Endothelial cell of umbilical vein (primary cell): ENCODE measurements at regions of chr16 and their contacts with region 1.

Region 1: DNA sequence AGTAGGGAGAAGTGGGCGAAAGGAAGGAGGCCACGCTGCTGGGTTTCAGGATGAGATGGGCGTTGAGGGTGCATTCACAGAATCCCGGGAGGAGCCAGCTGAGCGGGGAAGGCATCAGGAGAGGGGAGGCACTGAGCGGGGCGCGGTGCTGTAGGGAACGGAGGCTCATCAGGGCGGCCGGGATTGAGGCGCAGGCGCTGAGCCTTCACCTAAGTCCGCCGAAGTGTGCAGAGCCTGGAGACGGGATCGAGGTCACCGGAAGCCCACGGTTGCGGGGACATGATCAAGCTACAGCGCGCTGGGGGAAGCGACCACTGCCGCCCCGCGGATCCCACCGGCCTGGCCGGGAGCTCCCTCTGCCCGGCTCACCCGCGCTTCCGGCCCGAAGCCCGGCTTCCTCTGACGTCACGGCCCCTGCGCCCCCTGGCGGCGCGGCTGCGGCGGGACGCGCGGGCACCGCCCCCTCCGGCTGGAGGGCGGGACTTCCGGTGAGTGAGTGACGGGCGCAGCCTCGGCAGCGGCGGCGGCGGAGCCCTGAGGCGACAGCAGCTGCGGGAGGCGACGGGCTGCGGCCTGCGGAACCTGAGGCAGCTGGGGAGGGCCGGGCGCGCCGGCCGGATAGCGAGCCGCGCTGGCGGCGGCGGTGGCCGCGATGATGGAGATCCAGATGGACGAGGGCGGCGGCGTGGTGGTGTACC is at the start of gene MAPK8IP3:
- DNase-seq: peak; percentile 95
- H3K4me3 ChIP-seq: peak within 1 kb of the TSS; percentile 39 to 82 (median 60)
- H3K27ac ChIP-seq: peak within 1 kb of the TSS; percentile 72
- H3K4me1 ChIP-seq: peaks cover 12% of the 10 kb centered on the region
- H3K27me3 ChIP-seq: no peaks in the 10 kb centered on the region
- CTCF ChIP-seq: peak; percentile 73 to 100
- POLR2A ChIP-seq: peak; percentile 97
- total RNA-seq, gene MAPK8IP3: 92.2 and 95.0 TPM in 2 replicates

Region 2: DNA sequence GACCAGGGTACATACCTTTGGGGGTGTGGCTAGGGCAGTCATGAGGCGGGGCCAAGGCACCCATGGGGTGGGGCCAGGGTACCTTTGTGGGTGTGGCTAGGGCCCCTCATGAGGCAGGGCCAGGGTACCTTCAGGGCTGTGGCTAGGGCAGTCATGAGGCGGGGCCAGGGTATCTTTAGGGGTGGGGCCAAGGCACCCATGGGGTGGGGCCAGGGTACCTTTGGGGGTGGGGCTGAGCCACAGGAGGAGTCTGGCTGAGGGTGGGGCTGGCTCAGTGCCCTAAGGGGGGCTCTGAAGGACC is 908.8 kb before region 1 on chr16:
- CTCF ChIA-PET with region 1: no interaction called
- POLR2A ChIA-PET with region 1: no interaction called
- dilution Hi-C with region 1: no loop called
- intact Hi-C with region 1: no loop called
- DNase-seq: no peak
- H3K4me3 ChIP-seq: no peak overlapping the region
- H3K27ac ChIP-seq: no peak overlapping the region
- H3K4me1 ChIP-seq: no peaks in the 10 kb centered on the region
- H3K27me3 ChIP-seq: peaks cover 11 to 18% of the 10 kb centered on the region in 2 experiments
- CTCF ChIP-seq: no peak
- POLR2A ChIP-seq: no peak

Region 3: DNA sequence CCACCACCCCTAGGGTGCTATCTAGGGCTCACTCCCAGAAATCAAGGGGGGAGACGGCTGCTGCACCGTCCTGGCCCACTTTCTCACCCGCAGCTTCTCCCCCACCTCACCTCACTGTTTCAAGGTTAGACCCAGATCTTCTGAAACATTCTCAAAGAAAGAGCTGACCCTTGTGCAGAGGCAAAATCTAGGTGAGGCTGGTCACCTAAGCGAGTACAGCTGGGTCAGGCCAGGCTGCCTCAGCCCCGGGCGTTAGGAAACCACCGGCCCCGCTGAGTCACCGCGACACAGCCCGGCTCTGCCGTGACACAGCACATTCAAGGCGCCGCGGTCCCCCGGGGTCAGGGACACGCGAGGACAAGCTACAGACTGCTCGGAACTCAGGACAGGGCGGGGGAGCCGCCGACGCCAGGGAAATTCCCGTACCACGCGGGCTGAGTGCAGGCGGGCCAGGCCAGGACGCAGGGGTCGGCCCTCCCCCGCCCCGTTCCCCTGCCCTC is 327.0 kb before region 1 on chr16:
- CTCF ChIA-PET with region 1: no interaction called
- POLR2A ChIA-PET with region 1: no interaction called
- dilution Hi-C with region 1: no loop called
- intact Hi-C with region 1: loop called (anchors 5 kb)
- DNase-seq: peak; percentile 72
- H3K4me3 ChIP-seq: peak overlapping the region; percentile 10 to 41 (median 39)
- H3K27ac ChIP-seq: peak overlapping the region; percentile 91
- H3K4me1 ChIP-seq: peaks cover 12% of the 10 kb centered on the region
- H3K27me3 ChIP-seq: no peaks in the 10 kb centered on the region
- CTCF ChIP-seq: no peak
- POLR2A ChIP-seq: no peak

Region 4: DNA sequence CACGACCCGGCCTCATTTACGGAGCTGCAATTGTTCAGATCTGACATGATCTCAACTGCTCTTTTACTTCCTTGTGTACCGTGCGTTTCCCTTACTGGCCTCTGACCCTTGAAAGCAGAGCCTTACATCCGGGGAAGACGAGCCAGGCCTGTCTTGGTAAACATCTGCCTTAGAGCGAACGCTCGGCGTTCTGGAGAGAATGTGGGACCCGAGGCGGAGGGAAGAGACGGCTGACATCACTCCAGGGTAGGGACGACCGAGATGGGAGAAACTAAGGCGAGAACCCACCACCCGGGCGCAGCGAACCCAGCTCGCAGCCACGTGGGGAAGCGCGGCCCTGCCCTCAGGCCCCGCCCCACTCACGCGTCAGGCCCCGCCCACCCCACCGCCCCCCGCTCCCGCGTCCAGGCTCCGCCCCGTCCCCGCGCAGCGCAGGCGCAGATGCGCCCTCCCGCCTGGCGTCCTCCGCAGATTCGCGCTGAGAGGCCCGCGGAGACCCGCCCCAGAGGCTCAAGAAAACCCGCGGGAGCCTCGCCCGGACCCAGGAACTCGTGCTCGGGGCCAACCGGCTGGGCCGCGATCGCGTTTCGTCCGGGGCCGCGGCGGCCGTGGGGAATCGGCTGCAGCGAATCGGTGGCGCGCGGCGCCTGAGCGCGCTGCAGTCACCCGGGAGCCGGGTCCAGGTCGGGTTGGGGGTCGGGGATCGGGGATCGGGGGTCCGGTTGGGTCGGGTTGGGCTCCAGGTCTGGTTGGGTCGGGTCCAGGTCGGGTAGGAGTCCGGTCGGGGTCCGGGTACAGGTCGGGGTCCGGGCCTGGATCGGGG is 212.7 kb before region 1 on chr16 and contains the start of gene TELO2:
- CTCF ChIA-PET with region 1: interaction called, 20 read pairs
- POLR2A ChIA-PET with region 1: no interaction called
- dilution Hi-C with region 1: no loop called
- intact Hi-C with region 1: loop called (anchors 5 kb)
- DNase-seq: peak; percentile 63
- H3K4me3 ChIP-seq: peak within 1 kb of the TSS; percentile 67 to 85 (median 77)
- H3K27ac ChIP-seq: peak within 1 kb of the TSS; percentile 84
- H3K4me1 ChIP-seq: peaks cover 15% of the 10 kb centered on the region
- H3K27me3 ChIP-seq: no peaks in the 10 kb centered on the region
- CTCF ChIP-seq: no peak
- POLR2A ChIP-seq: peak; percentile 68
- total RNA-seq, gene TELO2: 60.5 and 61.6 TPM in 2 replicates

Region 5: DNA sequence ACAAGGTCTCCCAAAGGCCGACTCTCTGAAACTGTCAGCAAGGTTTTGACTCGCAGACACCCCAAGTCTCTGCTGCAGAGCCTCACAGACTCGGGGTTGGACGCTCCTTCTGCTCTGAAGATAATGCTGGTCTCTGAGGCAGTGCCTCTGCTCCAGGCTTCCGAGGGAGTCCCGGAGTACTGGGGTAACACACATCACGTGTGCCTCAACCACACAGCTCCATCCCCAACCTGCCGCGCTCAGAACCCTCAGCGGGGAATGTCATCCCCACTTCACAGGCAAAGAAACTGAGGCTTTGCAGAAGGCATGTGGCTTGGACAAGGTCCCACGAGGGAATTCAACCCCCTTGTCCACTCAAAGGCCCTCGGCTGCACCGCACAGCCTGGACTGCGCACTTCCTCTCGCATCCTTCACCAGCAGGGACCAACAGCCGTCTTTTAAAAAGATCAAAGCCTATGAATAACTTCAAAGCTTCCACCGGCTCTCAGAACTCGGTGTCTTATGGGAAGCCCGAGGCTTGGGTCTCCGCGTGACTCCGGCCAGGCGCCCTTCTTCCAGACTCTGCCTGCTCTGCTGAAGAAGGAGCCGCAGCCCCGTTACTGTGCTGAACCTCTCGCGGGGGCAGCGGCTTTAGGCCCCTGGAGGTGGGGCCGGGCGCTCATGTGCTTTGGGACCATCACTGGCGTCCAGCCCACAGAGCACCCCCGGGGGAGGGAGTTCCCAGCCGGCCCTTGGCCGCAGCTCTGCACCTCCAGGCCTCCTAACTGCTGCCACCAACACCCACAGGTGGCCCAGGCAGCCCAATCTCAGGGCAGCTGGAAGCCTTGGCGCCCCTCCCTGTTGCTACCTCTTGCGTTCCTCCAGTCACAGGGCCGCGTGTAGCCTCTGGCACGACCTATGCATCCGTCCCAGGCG is 170.2 kb before region 1 on chr16:
- CTCF ChIA-PET with region 1: no interaction called
- POLR2A ChIA-PET with region 1: no interaction called
- dilution Hi-C with region 1: no loop called
- intact Hi-C with region 1: no loop called
- DNase-seq: no peak
- H3K4me3 ChIP-seq: peak overlapping the region in 2 of 3 experiments; percentile 56 to 72
- H3K27ac ChIP-seq: no peak overlapping the region
- H3K4me1 ChIP-seq: peaks cover 37% of the 10 kb centered on the region
- H3K27me3 ChIP-seq: no peaks in the 10 kb centered on the region
- CTCF ChIP-seq: no peak
- POLR2A ChIP-seq: no peak

Region 6: DNA sequence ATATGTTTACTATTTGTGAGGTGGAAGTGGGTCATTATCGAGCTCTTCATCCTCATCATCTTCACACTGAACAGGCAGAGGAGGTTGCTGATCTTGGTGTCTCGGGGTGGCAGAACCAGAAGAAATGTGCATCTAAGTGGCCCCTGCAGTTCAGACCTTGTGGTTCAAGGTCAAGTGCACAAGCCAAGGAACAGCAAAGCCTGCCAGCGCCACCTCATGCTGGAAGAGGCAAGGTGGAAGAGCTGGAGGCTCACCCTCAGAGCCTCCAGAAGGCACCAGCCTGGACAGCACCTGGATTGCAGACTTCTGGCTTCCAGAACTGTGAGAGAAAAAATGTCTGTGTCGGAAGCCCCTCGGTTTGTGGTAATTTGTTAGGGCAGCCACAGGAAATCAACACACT is 126.6 kb before region 1 on chr16:
- CTCF ChIA-PET with region 1: no interaction called
- POLR2A ChIA-PET with region 1: no interaction called
- dilution Hi-C with region 1: no loop called
- intact Hi-C with region 1: no loop called
- DNase-seq: no peak
- H3K4me3 ChIP-seq: no peak overlapping the region
- H3K27ac ChIP-seq: no peak overlapping the region
- H3K4me1 ChIP-seq: no peaks in the 10 kb centered on the region
- H3K27me3 ChIP-seq: no peaks in the 10 kb centered on the region
- CTCF ChIP-seq: no peak
- POLR2A ChIP-seq: no peak

Region 7: GRCh38 chr16:1677802-1678496 is 27.9 kb before region 1 on chr16 and contains the start of gene JPT2:
- CTCF ChIA-PET with region 1: interaction called, 52 read pairs
- POLR2A ChIA-PET with region 1: interaction called, 14 read pairs
- dilution Hi-C with region 1: no loop called
- intact Hi-C with region 1: loop called (anchors 1 kb)
- DNase-seq: peak; percentile 99
- H3K4me3 ChIP-seq: peak within 1 kb of the TSS; percentile 60 to 96 (median 78)
- H3K27ac ChIP-seq: peak within 1 kb of the TSS; percentile 1
- H3K4me1 ChIP-seq: peaks cover 12% of the 10 kb centered on the region
- H3K27me3 ChIP-seq: no peaks in the 10 kb centered on the region
- CTCF ChIP-seq: no peak
- POLR2A ChIP-seq: peak; percentile 48
- total RNA-seq, gene JPT2: 86.5 and 93.3 TPM in 2 replicates

Region 8: GRCh38 chr16:1752853-1753252 is 47.0 kb after region 1 on chr16:
- CTCF ChIA-PET with region 1: no interaction called
- POLR2A ChIA-PET with region 1: no interaction called
- dilution Hi-C with region 1: no loop called
- intact Hi-C with region 1: no loop called
- DNase-seq: no peak
- H3K4me3 ChIP-seq: no peak overlapping the region
- H3K27ac ChIP-seq: no peak overlapping the region
- H3K4me1 ChIP-seq: no peaks in the 10 kb centered on the region
- H3K27me3 ChIP-seq: no peaks in the 10 kb centered on the region
- CTCF ChIP-seq: no peak
- POLR2A ChIP-seq: no peak

Region 9: GRCh38 chr16:1826691-1827575 is 121.1 kb after region 1 on chr16 and contains the starts of genes FAHD1 and HAGH:
- CTCF ChIA-PET with region 1: interaction called, 10 read pairs
- POLR2A ChIA-PET with region 1: no interaction called
- dilution Hi-C with region 1: no loop called
- intact Hi-C with region 1: no loop called
- DNase-seq: peak; percentile 99
- H3K4me3 ChIP-seq: peak within 1 kb of the TSS; percentile 47 to 91 (median 75)
- H3K27ac ChIP-seq: peak within 1 kb of the TSS; percentile 41
- H3K4me1 ChIP-seq: peaks cover 20% of the 10 kb centered on the region
- H3K27me3 ChIP-seq: no peaks in the 10 kb centered on the region
- CTCF ChIP-seq: no peak
- POLR2A ChIP-seq: peak; percentile 87
- total RNA-seq, gene FAHD1: 27.9 and 44.8 TPM in 2 replicates
- total RNA-seq, gene HAGH: 54.3 and 56.4 TPM in 2 replicates